ENCODE measurements at regions of chr3 and their contacts with region 1.

Region 1: DNA sequence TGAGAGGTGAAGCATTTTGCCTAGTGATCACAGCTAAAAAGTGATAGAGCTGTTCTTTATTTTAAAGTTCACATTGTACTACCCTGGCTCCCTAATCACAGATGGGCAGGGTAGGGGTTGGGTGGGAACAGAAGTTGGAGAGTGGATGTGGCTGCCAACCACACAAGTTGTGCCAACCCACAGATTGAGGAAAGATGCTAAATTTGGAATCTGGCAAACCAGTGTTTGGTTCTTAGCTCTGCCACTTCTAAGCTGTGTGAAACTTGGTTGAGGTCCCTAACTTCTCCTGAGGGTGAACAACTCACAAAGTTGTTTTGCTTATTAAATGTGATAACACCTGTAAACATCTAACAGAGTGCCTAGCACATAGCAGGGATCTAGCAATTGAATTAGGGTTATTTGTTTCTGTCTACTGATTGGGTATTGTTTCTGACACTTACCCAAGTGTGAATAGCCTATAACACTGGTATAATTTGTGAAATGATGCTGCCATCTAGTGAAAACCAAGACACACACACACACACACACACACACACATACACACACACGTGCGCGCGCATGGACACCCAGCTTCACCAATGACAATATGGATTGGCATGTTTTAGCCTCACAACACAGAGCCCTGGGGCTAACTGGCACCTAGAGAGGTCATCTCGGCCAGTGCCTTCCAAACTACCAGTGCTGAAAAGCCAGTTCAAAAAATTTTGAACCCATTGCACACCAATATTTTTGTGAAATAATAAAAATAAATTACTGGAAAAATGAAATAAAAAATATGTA is 25.3 kb downstream of the ADGRG7 start:
- DNase-seq: peak; percentile 78
- H3K4me3 ChIP-seq: no peak overlapping the region
- H3K27ac ChIP-seq: no peak overlapping the region
- H3K4me1 ChIP-seq: peaks cover 16% of the 10 kb centered on the region
- H3K27me3 ChIP-seq: no peaks in the 10 kb centered on the region
- CTCF ChIP-seq: peak; percentile 20 to 51

Region 2: GRCh38 chr3:100316641-100317069 is 318.0 kb before region 1 on chr3:
- CTCF ChIA-PET with region 1: no interaction called
- dilution Hi-C with region 1: no loop called
- in situ Hi-C with region 1: no loop called
- intact Hi-C with region 1: loop called (anchors 5 kb)
- DNase-seq: peak; percentile 45
- H3K4me3 ChIP-seq: no peak overlapping the region
- H3K27ac ChIP-seq: no peak overlapping the region
- H3K4me1 ChIP-seq: no peaks in the 10 kb centered on the region
- H3K27me3 ChIP-seq: no peaks in the 10 kb centered on the region
- CTCF ChIP-seq: peak; percentile 62 to 67

Region 3: GRCh38 chr3:100537622-100538338 is 96.9 kb before region 1 on chr3:
- CTCF ChIA-PET with region 1: no interaction called
- dilution Hi-C with region 1: no loop called
- in situ Hi-C with region 1: no loop called
- intact Hi-C with region 1: no loop called
- DNase-seq: peak; percentile 73
- H3K4me3 ChIP-seq: no peak overlapping the region
- H3K27ac ChIP-seq: peak overlapping the region; percentile 2
- H3K4me1 ChIP-seq: peaks cover 51% of the 10 kb centered on the region
- H3K27me3 ChIP-seq: no peaks in the 10 kb centered on the region
- CTCF ChIP-seq: no peak

Region 4: GRCh38 chr3:100603469-100603868 is 31.2 kb before region 1 on chr3:
- CTCF ChIA-PET with region 1: no interaction called
- dilution Hi-C with region 1: no loop called
- in situ Hi-C with region 1: no loop called
- intact Hi-C with region 1: loop called (anchors 2 kb)
- DNase-seq: peak; percentile 73
- H3K4me3 ChIP-seq: no peak overlapping the region
- H3K27ac ChIP-seq: peak overlapping the region; percentile 91
- H3K4me1 ChIP-seq: peaks cover 43% of the 10 kb centered on the region
- H3K27me3 ChIP-seq: no peaks in the 10 kb centered on the region
- CTCF ChIP-seq: peak; percentile 71 to 77

Region 5: GRCh38 chr3:100761211-100761942 is 126.7 kb after region 1 on chr3:
- CTCF ChIA-PET with region 1: no interaction called
- dilution Hi-C with region 1: no loop called
- in situ Hi-C with region 1: no loop called
- intact Hi-C with region 1: no loop called
- DNase-seq: no peak
- H3K4me3 ChIP-seq: no peak overlapping the region
- H3K27ac ChIP-seq: no peak overlapping the region
- H3K4me1 ChIP-seq: peaks cover 8% of the 10 kb centered on the region
- H3K27me3 ChIP-seq: no peaks in the 10 kb centered on the region
- CTCF ChIP-seq: peak; percentile 39 to 47

Region 6: GRCh38 chr3:100915706-100916495 is 281.2 kb after region 1 on chr3:
- CTCF ChIA-PET with region 1: no interaction called
- dilution Hi-C with region 1: no loop called
- in situ Hi-C with region 1: no loop called
- intact Hi-C with region 1: no loop called
- DNase-seq: no peak
- H3K4me3 ChIP-seq: no peak overlapping the region
- H3K27ac ChIP-seq: no peak overlapping the region
- H3K4me1 ChIP-seq: no peaks in the 10 kb centered on the region
- H3K27me3 ChIP-seq: no peaks in the 10 kb centered on the region
- CTCF ChIP-seq: no peak

Region 7: GRCh38 chr3:101163554-101163953 is 528.9 kb after region 1 on chr3:
- CTCF ChIA-PET with region 1: no interaction called
- dilution Hi-C with region 1: no loop called
- in situ Hi-C with region 1: no loop called
- intact Hi-C with region 1: no loop called
- DNase-seq: no peak
- H3K4me3 ChIP-seq: no peak overlapping the region
- H3K27ac ChIP-seq: no peak overlapping the region
- H3K4me1 ChIP-seq: no peaks in the 10 kb centered on the region
- H3K27me3 ChIP-seq: no peaks in the 10 kb centered on the region
- CTCF ChIP-seq: no peak